ENCODE measurements at regions of chr13 and their contacts with region 1.

Region 1: GRCh38 chr13:102555917-102556553 is 40.8 kb upstream of the TPP2 start:
- DNase-seq: peak; percentile 75
- H3K4me3 Mint-ChIP-seq: no peak overlapping the region
- H3K27ac Mint-ChIP-seq: no peak overlapping the region
- H3K4me1 Mint-ChIP-seq: peaks cover 6% of the 10 kb centered on the region
- H3K27me3 Mint-ChIP-seq: no peaks in the 10 kb centered on the region
- CTCF ChIP-seq: peak; percentile 48

Region 2: DNA sequence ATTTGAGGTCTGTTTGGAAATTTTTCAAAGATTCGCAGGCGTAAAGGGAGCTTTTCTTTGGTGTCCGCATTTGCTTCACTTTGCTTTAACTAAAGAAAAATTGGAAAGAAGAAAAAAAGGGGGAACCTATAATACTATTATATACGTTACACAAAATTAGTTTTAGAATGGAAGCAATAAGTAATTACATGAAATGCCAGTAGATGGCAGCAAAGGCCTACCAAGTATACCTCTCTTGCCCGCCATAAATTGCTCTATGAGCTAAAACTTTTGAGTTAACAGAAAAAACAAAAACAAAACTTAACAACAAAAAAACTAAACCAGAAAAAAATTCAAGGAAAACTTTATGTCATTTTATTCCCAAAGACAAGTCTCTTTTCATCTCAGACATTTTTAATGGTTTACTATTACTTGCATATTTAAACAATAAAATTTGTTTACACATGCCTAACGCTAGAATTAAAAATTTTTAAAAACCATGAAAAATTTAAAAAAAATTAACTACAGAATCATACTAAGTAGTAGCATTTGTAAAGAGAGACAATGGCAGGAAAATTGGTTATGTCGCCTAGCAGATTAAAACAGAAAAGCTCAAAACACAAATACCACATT is 1411.1 kb before region 1 on chr13:
- CTCF ChIA-PET with region 1: interaction called, 5 read pairs
- POLR2A ChIA-PET with region 1: no interaction called
- intact Hi-C with region 1: loop called (anchors 5 kb)
- DNase-seq: peak; percentile 67
- H3K4me3 Mint-ChIP-seq: no peak overlapping the region
- H3K27ac Mint-ChIP-seq: no peak overlapping the region
- H3K4me1 Mint-ChIP-seq: no peaks in the 10 kb centered on the region
- H3K27me3 Mint-ChIP-seq: no peaks in the 10 kb centered on the region
- CTCF ChIP-seq: peak; percentile 60

Region 3: GRCh38 chr13:101942038-101942437 is 614.0 kb before region 1 on chr13:
- CTCF ChIA-PET with region 1: interaction called, 34 read pairs
- POLR2A ChIA-PET with region 1: no interaction called
- intact Hi-C with region 1: loop called (anchors 1 kb)
- DNase-seq: peak; percentile 65
- H3K4me3 Mint-ChIP-seq: no peak overlapping the region
- H3K27ac Mint-ChIP-seq: no peak overlapping the region
- H3K4me1 Mint-ChIP-seq: no peaks in the 10 kb centered on the region
- H3K27me3 Mint-ChIP-seq: peaks cover 40% of the 10 kb centered on the region
- CTCF ChIP-seq: peak; percentile 77

Region 4: GRCh38 chr13:102141625-102142472 is 414.2 kb before region 1 on chr13:
- CTCF ChIA-PET with region 1: interaction called, 26 read pairs
- POLR2A ChIA-PET with region 1: no interaction called
- intact Hi-C with region 1: loop called (anchors 1 kb)
- DNase-seq: peak; percentile 31
- H3K4me3 Mint-ChIP-seq: no peak overlapping the region
- H3K27ac Mint-ChIP-seq: no peak overlapping the region
- H3K4me1 Mint-ChIP-seq: no peaks in the 10 kb centered on the region
- H3K27me3 Mint-ChIP-seq: no peaks in the 10 kb centered on the region
- CTCF ChIP-seq: peak; percentile 78

Region 5: DNA sequence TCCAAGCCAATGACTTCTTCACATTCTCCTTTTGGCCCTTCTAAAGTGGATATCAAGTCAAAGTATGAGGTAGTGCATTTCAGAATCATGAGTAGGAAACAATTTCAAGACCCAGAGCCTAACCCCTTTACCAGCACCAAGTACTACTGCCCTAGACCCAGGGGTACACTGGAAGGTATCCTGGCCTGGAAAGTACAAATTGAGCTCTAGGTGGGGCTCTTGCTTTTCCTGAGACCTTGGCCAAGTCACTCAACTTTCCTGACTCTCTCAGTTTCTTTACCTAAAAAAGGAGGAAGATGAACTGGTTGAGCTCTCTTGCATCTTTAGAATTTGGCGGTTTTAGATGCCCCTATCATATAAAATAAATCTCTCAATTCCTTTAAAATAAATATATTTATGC is 358.8 kb before region 1 on chr13:
- CTCF ChIA-PET with region 1: interaction called, 24 read pairs
- POLR2A ChIA-PET with region 1: no interaction called
- intact Hi-C with region 1: loop called (anchors 1 kb)
- DNase-seq: peak; percentile 57
- H3K4me3 Mint-ChIP-seq: no peak overlapping the region
- H3K27ac Mint-ChIP-seq: no peak overlapping the region
- H3K4me1 Mint-ChIP-seq: peaks cover 37% of the 10 kb centered on the region
- H3K27me3 Mint-ChIP-seq: no peaks in the 10 kb centered on the region
- CTCF ChIP-seq: peak; percentile 37

Region 6: GRCh38 chr13:102571075-102571474 is 15.0 kb after region 1 on chr13:
- CTCF ChIA-PET with region 1: interaction called, 61 read pairs
- POLR2A ChIA-PET with region 1: interaction called, 4 read pairs
- intact Hi-C with region 1: no loop called
- DNase-seq: peak; percentile 24
- H3K4me3 Mint-ChIP-seq: no peak overlapping the region
- H3K27ac Mint-ChIP-seq: no peak overlapping the region
- H3K4me1 Mint-ChIP-seq: no peaks in the 10 kb centered on the region
- H3K27me3 Mint-ChIP-seq: no peaks in the 10 kb centered on the region
- CTCF ChIP-seq: no peak

Measured in MCF 10A (cell line).